ENCODE measurements at regions of chr3 and their contacts with region 1.

Region 1: GRCh38 chr3:87167628-87168456 is 59.3 kb upstream of the CHMP2B start:
- DNase-seq: peak in 6 of 9 donors; percentile 6 to 44 (median 28)
- ATAC-seq: peak; percentile 63
- H3K4me3 ChIP-seq: no peak overlapping the region
- H3K4me3 Mint-ChIP-seq: peak overlapping the region in 9 of 10 donors; percentile 33 to 74 (median 54)
- H3K27ac ChIP-seq: no peak overlapping the region
- H3K27ac Mint-ChIP-seq: no peak overlapping the region
- H3K4me1 ChIP-seq: no peaks in the 10 kb centered on the region
- H3K4me1 Mint-ChIP-seq: peaks cover 0 to 10% (median 4%) of the 10 kb centered on the region in 7 donors
- H3K27me3 ChIP-seq: no peaks in the 10 kb centered on the region
- H3K27me3 Mint-ChIP-seq: peaks cover 14 to 28% (median 21%) of the 10 kb centered on the region in 5 donors

Region 2: GRCh38 chr3:85821130-85821756 is 1346.6 kb before region 1 on chr3:
- CTCF ChIA-PET with region 1: no interaction called
- POLR2A ChIA-PET with region 1: no interaction called
- intact Hi-C with region 1: loop called in 1 of 2 experiments (anchors 5 kb)
- DNase-seq: no peak
- ATAC-seq: no peak
- H3K4me3 ChIP-seq: no peak overlapping the region
- H3K4me3 Mint-ChIP-seq: no peak overlapping the region
- H3K27ac ChIP-seq: no peak overlapping the region
- H3K27ac Mint-ChIP-seq: no peak overlapping the region
- H3K4me1 ChIP-seq: no peaks in the 10 kb centered on the region
- H3K4me1 Mint-ChIP-seq: no peaks in the 10 kb centered on the region
- H3K27me3 ChIP-seq: no peaks in the 10 kb centered on the region
- H3K27me3 Mint-ChIP-seq: no peaks in the 10 kb centered on the region

Region 3: GRCh38 chr3:86702381-86702958 is 465.4 kb before region 1 on chr3:
- CTCF ChIA-PET with region 1: no interaction called
- POLR2A ChIA-PET with region 1: no interaction called
- intact Hi-C with region 1: loop called in 1 of 2 experiments (anchors 5 kb)
- DNase-seq: no peak
- ATAC-seq: no peak
- H3K4me3 ChIP-seq: no peak overlapping the region
- H3K4me3 Mint-ChIP-seq: no peak overlapping the region
- H3K27ac ChIP-seq: no peak overlapping the region
- H3K27ac Mint-ChIP-seq: no peak overlapping the region
- H3K4me1 ChIP-seq: no peaks in the 10 kb centered on the region
- H3K4me1 Mint-ChIP-seq: no peaks in the 10 kb centered on the region
- H3K27me3 ChIP-seq: no peaks in the 10 kb centered on the region
- H3K27me3 Mint-ChIP-seq: no peaks in the 10 kb centered on the region

Region 4: DNA sequence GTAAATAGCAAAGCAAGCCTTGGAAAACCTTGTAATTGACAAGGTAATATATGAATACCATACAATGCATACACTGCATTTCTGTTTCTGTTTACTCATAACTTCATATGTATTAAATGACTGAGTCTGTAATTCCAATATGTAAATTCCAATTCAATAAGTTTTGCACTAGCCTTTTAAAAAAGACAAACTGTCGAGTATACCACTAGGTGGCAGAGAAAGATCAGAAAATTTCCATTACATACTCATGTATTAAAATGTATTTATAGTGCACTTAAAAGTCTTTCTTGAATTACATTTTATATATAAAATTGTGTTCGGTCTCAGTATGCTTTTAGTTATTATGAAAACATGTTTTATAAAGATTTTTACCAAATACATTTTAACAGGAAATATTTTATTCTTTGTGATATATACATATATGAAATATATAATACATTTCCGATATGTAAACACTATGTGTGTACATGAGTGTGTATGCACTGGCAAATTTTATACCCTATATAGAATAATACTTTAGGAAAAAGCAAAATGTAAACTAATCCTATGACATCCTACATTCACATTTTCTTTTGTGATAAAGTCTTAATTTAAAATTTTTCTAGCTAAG is 393.7 kb before region 1 on chr3:
- CTCF ChIA-PET with region 1: no interaction called
- POLR2A ChIA-PET with region 1: no interaction called
- intact Hi-C with region 1: loop called in 1 of 2 experiments (anchors 1 kb)
- DNase-seq: no peak
- ATAC-seq: no peak
- H3K4me3 ChIP-seq: no peak overlapping the region
- H3K4me3 Mint-ChIP-seq: no peak overlapping the region
- H3K27ac ChIP-seq: no peak overlapping the region
- H3K27ac Mint-ChIP-seq: no peak overlapping the region
- H3K4me1 ChIP-seq: no peaks in the 10 kb centered on the region
- H3K4me1 Mint-ChIP-seq: no peaks in the 10 kb centered on the region
- H3K27me3 ChIP-seq: no peaks in the 10 kb centered on the region
- H3K27me3 Mint-ChIP-seq: no peaks in the 10 kb centered on the region

Region 5: DNA sequence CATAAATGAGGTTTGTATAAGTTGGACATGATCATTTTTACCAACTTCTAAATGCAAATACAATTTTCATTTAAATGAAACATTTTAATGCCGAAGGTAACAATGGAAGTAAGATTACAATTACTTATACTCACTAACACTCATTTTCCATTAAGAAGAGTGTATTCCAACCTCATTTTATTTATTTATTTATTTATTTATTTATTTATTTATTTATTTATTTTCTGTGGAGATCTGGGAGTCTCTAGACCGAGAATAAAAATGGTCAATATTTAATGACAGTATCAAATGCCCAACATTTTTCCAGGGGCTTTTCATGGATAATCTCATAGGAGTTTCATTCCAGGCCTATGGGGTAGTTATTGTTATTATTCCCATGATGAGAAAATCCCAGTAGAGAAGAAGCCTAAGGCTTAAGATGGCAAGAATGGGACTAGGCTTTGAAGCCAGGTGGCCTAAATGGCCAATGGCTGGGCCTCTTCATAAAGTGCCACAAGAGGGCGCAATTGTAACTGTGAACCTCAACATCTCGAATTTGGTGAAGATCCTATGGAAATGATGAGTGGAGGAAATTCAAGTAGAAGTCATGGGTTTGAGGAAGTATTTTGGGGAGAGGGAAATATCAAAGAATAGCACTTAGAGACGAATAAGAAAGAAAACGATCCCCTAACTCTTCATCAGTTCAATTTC is 198.2 kb before region 1 on chr3:
- CTCF ChIA-PET with region 1: no interaction called
- POLR2A ChIA-PET with region 1: no interaction called
- intact Hi-C with region 1: loop called (anchors 1 to 5 kb)
- DNase-seq: no peak
- ATAC-seq: no peak
- H3K4me3 ChIP-seq: no peak overlapping the region
- H3K4me3 Mint-ChIP-seq: no peak overlapping the region
- H3K27ac ChIP-seq: no peak overlapping the region
- H3K27ac Mint-ChIP-seq: no peak overlapping the region
- H3K4me1 ChIP-seq: no peaks in the 10 kb centered on the region
- H3K4me1 Mint-ChIP-seq: no peaks in the 10 kb centered on the region
- H3K27me3 ChIP-seq: no peaks in the 10 kb centered on the region
- H3K27me3 Mint-ChIP-seq: no peaks in the 10 kb centered on the region

Region 6: DNA sequence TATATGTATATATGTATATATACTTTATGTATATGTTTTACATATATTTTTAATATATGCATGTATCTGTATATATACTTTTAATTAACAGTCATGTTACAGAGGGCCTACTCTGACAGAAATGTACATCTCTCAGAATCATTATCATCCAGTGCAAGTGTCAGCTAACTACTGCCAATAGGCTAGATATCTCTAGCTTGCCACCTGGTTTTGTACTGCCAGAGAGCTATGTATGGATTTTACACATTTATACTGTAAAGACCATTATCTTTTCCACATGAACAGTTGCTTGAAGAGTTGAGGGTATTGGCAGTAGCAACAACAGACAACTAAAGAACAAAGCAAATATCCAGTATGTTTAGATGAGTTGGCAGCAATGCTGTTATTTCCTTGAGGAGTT is 77.2 kb before region 1 on chr3:
- CTCF ChIA-PET with region 1: no interaction called
- POLR2A ChIA-PET with region 1: no interaction called
- intact Hi-C with region 1: loop called in 1 of 2 experiments (anchors 2 kb)
- DNase-seq: no peak
- ATAC-seq: no peak
- H3K4me3 ChIP-seq: no peak overlapping the region
- H3K4me3 Mint-ChIP-seq: no peak overlapping the region
- H3K27ac ChIP-seq: no peak overlapping the region
- H3K27ac Mint-ChIP-seq: no peak overlapping the region
- H3K4me1 ChIP-seq: no peaks in the 10 kb centered on the region
- H3K4me1 Mint-ChIP-seq: peaks cover 0 to 16% (median 12%) of the 10 kb centered on the region in 7 donors
- H3K27me3 ChIP-seq: no peaks in the 10 kb centered on the region
- H3K27me3 Mint-ChIP-seq: peaks cover 7 to 27% (median 13%) of the 10 kb centered on the region in 5 donors

Region 7: GRCh38 chr3:87101861-87102625 is 65.8 kb before region 1 on chr3:
- CTCF ChIA-PET with region 1: no interaction called
- POLR2A ChIA-PET with region 1: no interaction called
- intact Hi-C with region 1: loop called in 1 of 2 experiments (anchors 5 kb)
- DNase-seq: no peak
- ATAC-seq: no peak
- H3K4me3 ChIP-seq: no peak overlapping the region
- H3K4me3 Mint-ChIP-seq: no peak overlapping the region
- H3K27ac ChIP-seq: no peak overlapping the region
- H3K27ac Mint-ChIP-seq: no peak overlapping the region
- H3K4me1 ChIP-seq: no peaks in the 10 kb centered on the region
- H3K4me1 Mint-ChIP-seq: no peaks in the 10 kb centered on the region
- H3K27me3 ChIP-seq: no peaks in the 10 kb centered on the region
- H3K27me3 Mint-ChIP-seq: peaks cover 0 to 8% (median 0%) of the 10 kb centered on the region in 5 donors